ENCODE measurements at regions of chr4 and their contacts with region 1.

Region 1: DNA sequence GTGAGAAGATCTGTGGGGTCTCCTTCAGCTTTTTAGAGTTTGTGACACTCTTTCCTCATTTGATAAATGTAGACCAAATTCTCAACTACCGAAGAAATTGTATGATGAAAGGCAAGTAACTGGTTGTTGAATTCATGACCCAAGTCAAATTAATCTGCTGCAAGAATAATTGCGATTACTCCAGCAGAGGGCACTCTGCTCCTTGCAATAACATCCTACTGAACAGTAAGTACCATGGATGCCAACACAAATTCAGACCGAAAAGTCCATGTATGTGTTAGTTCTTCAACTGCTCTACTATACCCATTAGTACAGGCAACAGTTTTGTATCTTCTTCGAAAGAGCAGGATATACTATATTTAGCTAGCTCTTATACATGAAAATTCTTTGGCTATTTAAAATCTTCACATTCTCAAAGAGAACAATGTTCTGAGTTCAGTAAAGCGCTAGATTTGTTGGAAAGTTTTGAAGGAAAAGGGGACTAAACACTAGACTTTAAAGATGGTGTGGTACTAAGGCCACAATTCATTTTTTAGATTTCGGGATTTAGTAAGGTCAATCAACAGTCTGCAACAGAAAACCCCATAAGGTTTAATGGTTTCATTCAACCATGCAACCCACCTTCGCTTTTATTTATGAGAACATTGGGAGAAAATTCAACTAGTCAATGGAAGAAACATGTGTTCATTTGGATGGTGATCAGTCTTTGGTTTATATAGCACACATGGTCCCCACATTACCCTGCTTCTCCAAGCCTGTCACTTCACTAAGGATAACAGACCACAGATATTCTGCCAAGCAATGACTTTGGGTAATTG is 105.4 kb upstream of the TBC1D9 start:
- DNase-seq: peak in 1 of 2 donors; percentile 80
- ATAC-seq: peak; percentile 33 to 80 (median 66)
- H3K4me3 ChIP-seq: no peak overlapping the region
- H3K27ac ChIP-seq: peak overlapping the region in 3 of 10 donors; percentile 41 to 60 (median 57)
- H3K4me1 ChIP-seq: peaks cover 0 to 35% (median 6%) of the 10 kb centered on the region in 9 donors
- H3K27me3 ChIP-seq: no peaks in the 10 kb centered on the region
- CTCF ChIP-seq: peak; percentile 57 to 92 (median 78)

Region 2: DNA sequence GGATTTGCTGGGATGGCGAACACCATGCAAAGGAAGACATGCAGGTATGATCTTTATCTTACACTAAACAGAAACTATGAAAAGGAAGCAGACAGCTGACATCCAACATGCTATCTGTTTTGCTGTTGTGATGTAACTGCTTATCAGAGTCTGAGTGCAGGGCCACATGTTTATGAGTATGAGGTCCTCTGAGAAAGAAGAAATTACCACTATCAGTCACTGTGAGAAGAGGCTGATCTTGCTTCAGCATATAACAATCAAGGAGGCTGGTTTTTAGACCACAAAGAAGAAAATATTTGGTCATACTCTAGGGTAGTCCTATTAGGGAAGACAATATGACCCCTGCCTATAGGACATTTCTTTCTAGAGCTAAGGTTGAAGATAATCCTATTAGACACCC is 452.6 kb before region 1 on chr4:
- intact Hi-C with region 1: no loop called
- DNase-seq: no peak
- ATAC-seq: no peak
- H3K4me3 ChIP-seq: no peak overlapping the region
- H3K27ac ChIP-seq: no peak overlapping the region
- H3K4me1 ChIP-seq: peaks cover 0 to 8% (median 0%) of the 10 kb centered on the region in 9 donors
- H3K27me3 ChIP-seq: no peaks in the 10 kb centered on the region
- CTCF ChIP-seq: no peak

Region 3: DNA sequence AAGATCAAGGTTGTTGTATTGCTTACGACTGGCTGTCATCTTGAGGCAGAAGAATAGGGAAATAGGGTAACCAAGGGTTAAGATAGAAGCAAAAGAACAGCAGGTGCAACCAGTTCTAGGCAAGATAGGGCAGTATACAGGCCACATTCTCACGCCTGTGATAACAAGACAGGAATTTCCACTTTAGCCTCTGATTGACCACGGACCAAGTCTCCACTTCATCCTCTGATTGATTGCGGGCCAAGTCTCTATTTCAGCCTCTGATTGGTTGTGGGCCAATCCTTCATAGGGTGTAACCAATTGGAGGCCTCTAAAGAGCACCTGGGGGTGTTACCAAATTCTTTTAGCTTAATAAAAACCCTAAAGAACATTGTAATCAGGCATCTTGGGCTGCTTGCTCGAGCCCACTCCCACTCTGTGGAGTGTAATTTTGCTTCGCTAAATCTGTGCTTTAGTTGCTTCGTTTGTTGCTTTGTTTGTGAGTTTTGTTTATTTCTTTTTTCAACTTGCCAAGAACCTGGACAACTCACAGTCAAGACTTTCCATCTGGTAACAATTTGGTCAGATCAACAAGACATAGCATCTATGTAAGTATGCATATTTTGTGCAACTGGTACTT is 96.7 kb before region 1 on chr4:
- intact Hi-C with region 1: no loop called
- DNase-seq: no peak
- ATAC-seq: peak in 1 of 8 donors; percentile 53
- H3K4me3 ChIP-seq: no peak overlapping the region
- H3K27ac ChIP-seq: no peak overlapping the region
- H3K4me1 ChIP-seq: peaks cover 0 to 9% (median 0%) of the 10 kb centered on the region in 9 donors
- H3K27me3 ChIP-seq: no peaks in the 10 kb centered on the region
- CTCF ChIP-seq: no peak

Region 4: GRCh38 chr4:140851032-140851636 is 10.4 kb before region 1 on chr4:
- intact Hi-C with region 1: no loop called
- DNase-seq: peak in 1 of 2 donors; percentile 63
- ATAC-seq: peak in 6 of 8 donors; percentile 58 to 71 (median 64)
- H3K4me3 ChIP-seq: no peak overlapping the region
- H3K27ac ChIP-seq: no peak overlapping the region
- H3K4me1 ChIP-seq: peaks cover 0 to 19% (median 0%) of the 10 kb centered on the region in 9 donors
- H3K27me3 ChIP-seq: no peaks in the 10 kb centered on the region
- CTCF ChIP-seq: peak; percentile 59 to 92 (median 78)

Region 5: DNA sequence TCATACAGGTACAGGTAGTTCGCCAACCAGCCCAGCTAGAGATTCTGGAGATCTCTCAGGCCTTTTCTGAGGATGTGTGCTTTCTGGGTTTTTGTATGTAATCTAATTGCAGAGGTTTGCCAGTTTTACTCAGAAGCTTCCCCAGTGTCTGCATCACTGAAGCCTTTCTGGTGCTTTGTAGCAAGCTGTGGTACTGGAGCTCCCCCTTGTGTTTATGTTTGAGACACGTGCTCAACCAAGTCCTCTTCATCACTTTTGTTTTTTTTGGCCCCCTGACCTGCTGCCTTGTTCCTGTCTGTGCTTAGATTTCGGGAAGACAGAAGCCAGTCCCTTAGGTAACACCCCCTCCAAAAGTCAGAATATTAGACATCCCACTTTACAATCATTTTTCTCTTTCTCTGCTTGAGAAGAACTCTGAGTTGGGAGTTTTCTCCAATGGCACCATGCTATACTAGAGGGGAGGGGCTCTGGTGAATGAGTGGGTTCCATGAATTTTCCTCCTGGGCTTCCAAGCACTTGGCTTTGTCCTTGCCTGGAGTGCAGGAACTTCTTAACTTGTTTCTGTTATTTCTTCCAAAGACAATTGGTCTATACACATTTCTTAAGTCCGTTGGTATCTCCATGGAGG is 23.0 kb after region 1 on chr4:
- intact Hi-C with region 1: loop called in 3 of 10 experiments (anchors 1 to 2 kb)
- DNase-seq: peak in 1 of 2 donors; percentile 51
- ATAC-seq: peak; percentile 52 to 77 (median 70)
- H3K4me3 ChIP-seq: no peak overlapping the region
- H3K27ac ChIP-seq: peak overlapping the region in 1 of 10 donors; percentile 10
- H3K4me1 ChIP-seq: peaks cover 0 to 32% (median 4%) of the 10 kb centered on the region in 9 donors
- H3K27me3 ChIP-seq: no peaks in the 10 kb centered on the region
- CTCF ChIP-seq: peak; percentile 37 to 74 (median 69)

Region 6: GRCh38 chr4:140928880-140929279 is 67.3 kb after region 1 on chr4:
- intact Hi-C with region 1: no loop called
- DNase-seq: no peak
- ATAC-seq: peak in 3 of 8 donors; percentile 13 to 29 (median 16)
- H3K4me3 ChIP-seq: no peak overlapping the region
- H3K27ac ChIP-seq: no peak overlapping the region
- H3K4me1 ChIP-seq: peaks cover 0 to 49% (median 5%) of the 10 kb centered on the region in 9 donors
- H3K27me3 ChIP-seq: no peaks in the 10 kb centered on the region
- CTCF ChIP-seq: no peak

Region 7: GRCh38 chr4:140989944-140990343 is 128.4 kb after region 1 on chr4:
- intact Hi-C with region 1: loop called in 4 of 10 experiments (anchors 5 to 10 kb)
- DNase-seq: no peak
- ATAC-seq: peak in 7 of 8 donors; percentile 66 to 87 (median 82)
- H3K4me3 ChIP-seq: no peak overlapping the region
- H3K27ac ChIP-seq: peak overlapping the region in 7 of 10 donors; percentile 7 to 67 (median 52)
- H3K4me1 ChIP-seq: peaks cover 0 to 39% (median 22%) of the 10 kb centered on the region in 9 donors
- H3K27me3 ChIP-seq: no peaks in the 10 kb centered on the region
- CTCF ChIP-seq: no peak

Region 8: GRCh38 chr4:141002323-141002805 is 140.8 kb after region 1 on chr4:
- intact Hi-C with region 1: loop called in 3 of 10 experiments (anchors 10 kb)
- DNase-seq: no peak
- ATAC-seq: peak; percentile 74 to 93 (median 89)
- H3K4me3 ChIP-seq: peak overlapping the region in 1 of 10 donors; percentile 9
- H3K27ac ChIP-seq: peak overlapping the region; percentile 46 to 79 (median 66)
- H3K4me1 ChIP-seq: peaks cover 0 to 55% (median 13%) of the 10 kb centered on the region in 9 donors
- H3K27me3 ChIP-seq: no peaks in the 10 kb centered on the region
- CTCF ChIP-seq: no peak

Region 9: GRCh38 chr4:141215030-141215429 is 353.5 kb after region 1 on chr4:
- intact Hi-C with region 1: loop called in 4 of 10 experiments (anchors 10 kb)
- DNase-seq: no peak
- ATAC-seq: no peak
- H3K4me3 ChIP-seq: no peak overlapping the region
- H3K27ac ChIP-seq: peak overlapping the region in 3 of 10 donors; percentile 10 to 25 (median 21)
- H3K4me1 ChIP-seq: peaks cover 0 to 29% (median 8%) of the 10 kb centered on the region in 9 donors
- H3K27me3 ChIP-seq: no peaks in the 10 kb centered on the region
- CTCF ChIP-seq: no peak

Region 10: GRCh38 chr4:142582340-142582739 is 1720.8 kb after region 1 on chr4:
- intact Hi-C with region 1: loop called in 1 of 10 experiments (anchors 5 kb)
- DNase-seq: no peak
- ATAC-seq: no peak
- H3K4me3 ChIP-seq: no peak overlapping the region
- H3K27ac ChIP-seq: no peak overlapping the region
- H3K4me1 ChIP-seq: no peaks in the 10 kb centered on the region
- H3K27me3 ChIP-seq: no peaks in the 10 kb centered on the region
- CTCF ChIP-seq: no peak